Activated T-helper 2 cell treated with anti-CD3 and anti-CD28 coated beads, Interferon-gamma antibody, Interleukin-2, Interleukin-4, amounts not matched to agents 10 μg/mL and 5 μg/mL and 100 μg/mL, durations not matched to agents 14 hours and 24 hours and 36 hours (primary cell): ENCODE measurements at regions of chr9 and their contacts with region 1.

Region 1: DNA sequence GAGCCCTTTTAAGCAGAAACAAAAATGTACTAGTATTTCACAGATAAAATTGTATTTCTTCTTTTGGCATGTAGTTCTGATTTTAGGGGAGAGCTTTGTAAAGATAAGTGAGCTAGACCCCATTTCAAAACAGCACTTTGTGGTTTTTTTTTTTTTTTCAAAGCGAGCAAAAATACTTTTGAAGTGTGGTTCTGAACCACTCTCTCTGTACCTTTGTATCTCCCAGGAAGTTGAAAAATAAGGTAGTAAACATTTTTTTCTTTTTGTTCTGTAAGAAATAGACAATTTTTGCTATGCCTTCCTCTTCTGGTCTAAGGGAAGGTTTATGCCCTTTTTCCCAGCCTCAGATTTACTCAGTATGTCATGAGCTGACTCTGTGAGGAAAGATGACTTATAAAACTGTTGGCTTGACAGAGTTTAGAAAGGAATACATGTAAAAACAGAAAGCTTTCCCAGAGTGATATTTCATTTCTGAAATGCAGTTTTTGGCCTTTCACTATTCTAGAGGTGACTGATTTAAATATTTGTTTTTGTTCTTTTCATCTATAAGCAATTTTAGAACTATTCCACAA is 12.5 kb downstream of the ERCC6L2 start:
- DNase-seq: no peak
- H3K4me3 Mint-ChIP-seq: peak overlapping the region; percentile 30
- H3K27ac Mint-ChIP-seq: peak overlapping the region; percentile 12
- H3K4me1 Mint-ChIP-seq: peaks cover 38% of the 10 kb centered on the region
- H3K27me3 Mint-ChIP-seq: no peaks in the 10 kb centered on the region

Region 2: GRCh38 chr9:95744321-95744720 is 143.7 kb before region 1 on chr9:
- intact Hi-C with region 1: no loop called
- DNase-seq: no peak
- H3K4me3 Mint-ChIP-seq: no peak overlapping the region
- H3K27ac Mint-ChIP-seq: no peak overlapping the region
- H3K4me1 Mint-ChIP-seq: peaks cover 3% of the 10 kb centered on the region
- H3K27me3 Mint-ChIP-seq: peaks cover 41% of the 10 kb centered on the region

Region 3: GRCh38 chr9:95930277-95930676 is 42.3 kb after region 1 on chr9:
- intact Hi-C with region 1: loop called (anchors 5 kb)
- DNase-seq: no peak
- H3K4me3 Mint-ChIP-seq: no peak overlapping the region
- H3K27ac Mint-ChIP-seq: no peak overlapping the region
- H3K4me1 Mint-ChIP-seq: peaks cover 7% of the 10 kb centered on the region
- H3K27me3 Mint-ChIP-seq: no peaks in the 10 kb centered on the region